HEK293 (cell line): ENCODE measurements at regions of chr3 and their contacts with region 1.

Region 1: GRCh38 chr3:196739671-196740480 is at the start of gene PAK2:
- H3K4me3 ChIP-seq: peak within 1 kb of the TSS; percentile 74
- H3K27ac ChIP-seq: peak within 1 kb of the TSS; percentile 91
- H3K4me1 ChIP-seq: no peaks in the 10 kb centered on the region; the same call in 1 of the 2 replicates
- CTCF ChIP-seq: no peak; the same call in 1 of the 2 replicates

Region 2: GRCh38 chr3:196711838-196712513 is 27.9 kb before region 1 on chr3 and contains the starts of genes CEP19 and PIGX:
- CTCF ChIA-PET with region 1: no interaction called
- POLR2A ChIA-PET with region 1: interaction called, 21 read pairs
- H3K4me3 ChIP-seq: peak within 1 kb of the TSS; percentile 92
- H3K27ac ChIP-seq: peak within 1 kb of the TSS; percentile 75
- H3K4me1 ChIP-seq: 0 out of 2 replicates have a peak, but pooled peaks cover 6% of the 10 kb centered on the region
- CTCF ChIP-seq: no peak

Region 3: GRCh38 chr3:196875258-196875657 is 135.4 kb after region 1 on chr3:
- CTCF ChIA-PET with region 1: no interaction called
- POLR2A ChIA-PET with region 1: no interaction called
- H3K4me3 ChIP-seq: no peak overlapping the region
- H3K27ac ChIP-seq: no peak overlapping the region
- H3K4me1 ChIP-seq: no peaks in the 10 kb centered on the region
- CTCF ChIP-seq: no peak